OCI-LY7 (cell line): ENCODE measurements at regions of chr3 and their contacts with region 1.

Region 1: GRCh38 chr3:122055215-122055614 is at the start of gene CD86:
- DNase-seq: peak; percentile 86
- H3K4me3 ChIP-seq: peak within 1 kb of the TSS; percentile 72
- H3K27ac ChIP-seq: peak within 1 kb of the TSS; percentile 61
- H3K4me1 ChIP-seq: peaks cover 49% of the 10 kb centered on the region
- CTCF ChIP-seq: no peak
- total RNA-seq, gene CD86: 10.8 and 13.5 TPM in 2 replicates

Region 2: DNA sequence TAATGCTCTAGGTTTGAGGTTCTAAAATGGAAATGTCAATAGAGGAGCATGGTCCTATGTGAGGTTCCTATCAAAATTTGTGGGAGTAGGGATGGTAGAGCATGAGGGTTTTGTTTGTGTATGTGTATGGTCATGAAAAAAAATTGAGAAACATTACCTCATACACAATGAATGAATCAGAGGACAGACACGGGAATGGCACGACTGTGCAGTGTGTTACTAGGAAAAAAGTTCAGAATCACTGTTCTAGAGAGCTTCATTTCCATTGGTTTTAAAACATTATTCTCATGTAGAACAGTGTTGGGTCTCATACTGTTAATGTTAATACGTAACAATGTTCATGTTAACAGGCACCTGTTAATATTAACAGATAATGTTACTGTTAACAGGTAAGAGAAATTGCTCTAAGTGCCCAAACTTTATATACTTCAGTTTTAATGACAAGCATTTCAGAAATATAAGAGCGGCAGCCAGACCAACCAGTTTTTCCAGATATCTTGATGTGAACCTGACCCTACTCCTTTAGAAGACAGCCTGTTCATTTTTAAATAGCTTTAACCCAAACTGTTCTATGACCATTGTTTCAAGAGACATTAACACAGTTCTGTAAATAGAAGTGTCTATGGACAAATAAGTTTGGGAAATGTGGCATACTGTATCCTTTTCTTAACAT is 113.0 kb before region 1 on chr3:
- CTCF ChIA-PET with region 1: no interaction called
- POLR2A ChIA-PET with region 1: no interaction called
- intact Hi-C with region 1: no loop called
- DNase-seq: no peak
- H3K4me3 ChIP-seq: no peak overlapping the region
- H3K27ac ChIP-seq: no peak overlapping the region
- H3K4me1 ChIP-seq: no peaks in the 10 kb centered on the region
- CTCF ChIP-seq: no peak

Region 3: DNA sequence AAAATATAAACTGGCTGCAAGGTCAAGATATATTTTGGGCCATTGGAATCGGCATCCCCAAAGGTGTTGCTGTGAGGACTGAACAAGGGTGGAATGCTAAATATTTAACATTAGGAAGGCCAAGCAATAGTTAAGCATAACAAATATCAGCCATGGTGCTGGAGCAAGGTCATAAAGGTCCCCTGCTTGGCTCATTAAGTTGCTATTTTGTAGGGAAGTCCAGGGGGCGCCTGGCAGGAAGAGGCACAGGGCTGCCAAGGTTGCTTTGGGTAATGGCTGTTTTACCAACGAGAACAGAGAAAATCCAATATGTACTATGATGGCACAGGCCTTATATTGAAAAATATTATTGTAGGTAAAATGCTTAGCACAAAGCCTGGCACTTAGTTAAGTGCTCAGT is 98.9 kb before region 1 on chr3:
- CTCF ChIA-PET with region 1: no interaction called
- POLR2A ChIA-PET with region 1: no interaction called
- intact Hi-C with region 1: no loop called
- DNase-seq: no peak
- H3K4me3 ChIP-seq: no peak overlapping the region
- H3K27ac ChIP-seq: no peak overlapping the region
- H3K4me1 ChIP-seq: no peaks in the 10 kb centered on the region
- CTCF ChIP-seq: peak; percentile 23; the same call in 1 of the 2 replicates

Region 4: GRCh38 chr3:122074621-122075265 is 19.5 kb after region 1 on chr3:
- CTCF ChIA-PET with region 1: interaction called, 3 read pairs
- POLR2A ChIA-PET with region 1: interaction called, 43 read pairs
- intact Hi-C with region 1: loop called (anchors 2 kb)
- DNase-seq: peak; percentile 64
- H3K4me3 ChIP-seq: peak overlapping the region; percentile 71
- H3K27ac ChIP-seq: peak overlapping the region; percentile 81
- H3K4me1 ChIP-seq: peaks cover 69% of the 10 kb centered on the region
- CTCF ChIP-seq: no peak

Region 5: DNA sequence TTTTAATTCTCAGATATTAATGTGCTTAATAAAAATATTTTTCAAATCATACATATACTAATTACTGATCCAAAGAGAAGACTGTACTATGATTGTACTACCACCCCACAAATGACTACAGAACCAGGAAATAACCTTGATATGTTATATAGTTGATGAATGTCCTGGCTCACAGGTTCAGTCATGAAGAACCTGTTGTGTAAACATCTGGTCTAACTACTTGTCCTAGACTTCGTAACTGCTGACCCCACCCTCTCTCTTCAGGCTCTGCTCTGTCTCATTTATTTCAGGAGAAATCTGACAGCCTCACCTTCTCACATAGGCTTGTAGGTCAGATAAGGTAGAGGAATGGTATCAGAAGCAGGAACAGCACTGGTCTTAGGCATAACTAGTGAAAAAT is 255.1 kb after region 1 on chr3:
- CTCF ChIA-PET with region 1: no interaction called
- POLR2A ChIA-PET with region 1: no interaction called
- intact Hi-C with region 1: no loop called
- DNase-seq: no peak
- H3K4me3 ChIP-seq: no peak overlapping the region
- H3K27ac ChIP-seq: no peak overlapping the region
- H3K4me1 ChIP-seq: no peaks in the 10 kb centered on the region
- CTCF ChIP-seq: no peak

Region 6: DNA sequence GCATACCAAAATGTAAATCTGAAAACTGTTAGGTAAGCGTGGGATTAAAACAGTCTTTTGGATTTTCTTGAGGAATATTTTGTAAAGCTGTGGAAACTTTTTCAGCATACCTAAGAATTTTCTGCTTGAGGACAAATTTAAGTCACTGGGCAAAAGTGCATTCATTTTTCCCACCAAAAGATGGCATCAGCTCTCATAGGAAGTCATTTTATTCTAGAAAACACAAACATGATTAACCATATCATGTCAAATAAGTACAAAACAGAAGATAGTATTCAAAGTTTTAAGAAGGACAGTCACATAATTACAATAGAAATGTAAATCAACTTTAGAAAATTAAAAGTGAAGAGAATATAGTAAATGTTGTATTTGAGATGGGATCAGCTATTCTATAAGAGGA is 803.2 kb after region 1 on chr3:
- CTCF ChIA-PET with region 1: no interaction called
- POLR2A ChIA-PET with region 1: no interaction called
- intact Hi-C with region 1: no loop called
- DNase-seq: peak; percentile 19
- H3K4me3 ChIP-seq: no peak overlapping the region
- H3K27ac ChIP-seq: no peak overlapping the region
- H3K4me1 ChIP-seq: no peaks in the 10 kb centered on the region
- CTCF ChIP-seq: peak; percentile 77